Mammary epithelial cell (primary cell): ENCODE measurements at regions of chr7 and their contacts with region 1.

Region 1: DNA sequence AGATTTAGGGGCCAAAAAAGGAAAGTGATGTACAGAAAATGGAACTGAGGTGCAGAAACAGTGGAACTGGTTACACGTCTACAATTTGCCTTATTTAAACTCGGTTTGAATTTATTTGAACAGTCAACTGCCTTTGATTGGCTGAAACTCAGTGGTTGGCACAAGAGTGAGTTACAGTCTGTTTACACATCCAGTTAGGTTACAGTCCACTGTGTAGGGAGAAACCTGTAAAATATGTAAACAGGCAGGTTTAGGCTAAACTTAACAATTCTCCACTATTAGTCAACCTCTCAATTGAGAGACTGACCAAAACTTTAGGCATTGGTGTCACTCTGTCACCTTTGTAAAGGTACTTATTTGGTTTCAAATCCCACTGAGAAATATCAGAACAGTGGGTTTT is 40.3 kb upstream of the RELN start:
- DNase-seq: no peak
- H3K4me3 ChIP-seq: no peak overlapping the region
- H3K27ac ChIP-seq: no peak overlapping the region
- H3K4me1 ChIP-seq: no peaks in the 10 kb centered on the region
- H3K27me3 ChIP-seq: no peaks in the 10 kb centered on the region
- CTCF ChIP-seq: no peak

Region 2: GRCh38 chr7:104064969-104065387 is 35.2 kb after region 1 on chr7:
- CTCF ChIA-PET with region 1: no interaction called
- dilution Hi-C with region 1: loop called (anchors 5 kb)
- in situ Hi-C with region 1: no loop called
- intact Hi-C with region 1: no loop called
- DNase-seq: no peak
- H3K4me3 ChIP-seq: no peak overlapping the region
- H3K27ac ChIP-seq: no peak overlapping the region
- H3K4me1 ChIP-seq: no peaks in the 10 kb centered on the region
- H3K27me3 ChIP-seq: no peaks in the 10 kb centered on the region
- CTCF ChIP-seq: no peak

Region 3: DNA sequence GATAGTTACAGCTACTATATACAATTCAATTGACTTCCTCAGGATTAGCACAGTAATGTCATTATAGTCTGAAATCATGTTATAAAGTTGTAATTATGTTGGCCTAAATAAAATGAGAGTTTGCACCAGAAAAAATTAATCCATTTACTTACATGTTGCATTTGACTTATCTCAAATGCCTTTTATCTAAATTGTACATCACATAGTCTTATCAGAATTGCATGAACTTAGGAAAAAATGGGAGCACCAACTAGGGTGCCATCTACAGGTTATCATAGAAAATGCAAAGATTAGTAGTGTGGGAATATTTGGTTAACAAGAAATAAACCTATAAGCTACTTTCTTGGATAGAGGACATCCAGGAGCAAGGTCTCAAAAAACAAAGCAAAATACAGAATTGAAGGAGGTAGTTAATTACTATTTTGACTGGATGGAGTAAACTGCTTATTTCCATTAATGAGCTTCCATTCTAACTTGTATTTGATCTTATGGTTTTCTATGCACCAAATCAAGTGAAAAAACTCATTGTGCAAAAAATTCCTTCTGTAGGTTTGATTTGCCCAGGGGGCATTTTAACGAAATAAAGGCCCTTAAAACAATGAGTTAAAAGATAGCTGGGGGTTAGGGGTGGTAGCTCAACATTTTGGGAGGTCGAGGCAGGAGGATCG is 238.1 kb after region 1 on chr7:
- CTCF ChIA-PET with region 1: no interaction called
- dilution Hi-C with region 1: no loop called
- in situ Hi-C with region 1: no loop called
- intact Hi-C with region 1: no loop called
- DNase-seq: peak; percentile 6
- H3K4me3 ChIP-seq: no peak overlapping the region
- H3K27ac ChIP-seq: no peak overlapping the region
- H3K4me1 ChIP-seq: no peaks in the 10 kb centered on the region
- H3K27me3 ChIP-seq: no peaks in the 10 kb centered on the region
- CTCF ChIP-seq: peak; percentile 47 to 66

Region 4: DNA sequence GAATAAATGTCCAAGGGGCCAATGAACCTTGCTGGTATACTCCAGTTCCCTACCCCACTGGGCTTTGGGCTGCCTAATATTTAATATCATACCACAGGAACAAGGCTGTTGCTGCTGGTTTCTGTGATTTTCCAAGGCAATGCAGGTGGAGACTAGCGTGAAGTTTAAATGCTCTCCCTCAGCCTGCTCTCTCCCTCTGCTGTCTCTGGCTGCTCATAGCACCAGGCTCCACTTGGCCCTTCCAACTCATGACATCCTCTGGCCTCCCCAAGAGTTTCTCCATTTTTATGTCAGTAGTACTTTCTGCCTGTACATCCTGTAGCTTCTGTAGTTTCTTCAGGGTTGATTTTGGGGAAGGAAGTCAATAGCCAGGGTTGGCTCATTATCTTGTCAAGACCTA is 402.2 kb after region 1 on chr7:
- CTCF ChIA-PET with region 1: no interaction called
- dilution Hi-C with region 1: no loop called
- in situ Hi-C with region 1: no loop called
- intact Hi-C with region 1: no loop called
- DNase-seq: no peak
- H3K4me3 ChIP-seq: no peak overlapping the region
- H3K27ac ChIP-seq: no peak overlapping the region
- H3K4me1 ChIP-seq: no peaks in the 10 kb centered on the region
- H3K27me3 ChIP-seq: peaks cover 2% of the 10 kb centered on the region
- CTCF ChIP-seq: no peak